H1 (cell line): ENCODE measurements at regions of chr18 and their contacts with region 1.

Region 1: GRCh38 chr18:65214456-65214855 is 536.4 kb upstream of the CDH7 start:
- DNase-seq: no peak
- H3K4me3 ChIP-seq: no peak overlapping the region
- H3K27ac ChIP-seq: no peak overlapping the region
- H3K4me1 ChIP-seq: no peaks in the 10 kb centered on the region
- H3K27me3 ChIP-seq: no peaks in the 10 kb centered on the region
- CTCF ChIP-seq: no peak
- EP300 ChIP-seq: no peak
- POLR2A ChIP-seq: no peak
- RAD21 ChIP-seq: no peak

Region 2: DNA sequence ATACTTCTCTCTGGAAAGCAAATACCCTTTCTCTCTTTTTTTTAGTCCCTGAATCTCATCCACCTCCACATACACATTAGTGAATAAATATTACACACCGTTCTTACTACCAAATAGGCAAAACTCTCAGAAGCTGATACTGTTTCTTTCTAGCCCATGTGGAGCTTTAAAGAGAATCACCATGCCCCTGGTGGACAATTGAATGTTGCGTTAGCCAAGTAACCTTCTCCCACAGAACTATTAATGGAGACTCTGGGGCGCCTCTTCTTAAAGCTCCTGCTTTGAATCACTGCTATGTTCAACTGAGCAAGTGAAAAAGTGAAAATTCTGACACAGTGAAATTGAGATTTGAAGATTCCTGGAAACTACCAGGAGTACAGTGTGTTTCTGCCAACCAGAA is 13.5 kb after region 1 on chr18:
- CTCF ChIA-PET with region 1: interaction called, 12 read pairs
- POLR2A ChIA-PET with region 1: no interaction called
- DNase-seq: no peak
- H3K4me3 ChIP-seq: no peak overlapping the region
- H3K27ac ChIP-seq: no peak overlapping the region
- H3K4me1 ChIP-seq: no peaks in the 10 kb centered on the region; a peak in 1 of 7 replicates
- H3K27me3 ChIP-seq: no peaks in the 10 kb centered on the region
- CTCF ChIP-seq: peak in 2 of 3 experiments; percentile 31 to 34; a peak in 2 of 4 replicates
- EP300 ChIP-seq: no peak
- POLR2A ChIP-seq: no peak
- RAD21 ChIP-seq: peak in 1 of 2 experiments; percentile 37; a peak in 2 of 4 replicates

Region 3: DNA sequence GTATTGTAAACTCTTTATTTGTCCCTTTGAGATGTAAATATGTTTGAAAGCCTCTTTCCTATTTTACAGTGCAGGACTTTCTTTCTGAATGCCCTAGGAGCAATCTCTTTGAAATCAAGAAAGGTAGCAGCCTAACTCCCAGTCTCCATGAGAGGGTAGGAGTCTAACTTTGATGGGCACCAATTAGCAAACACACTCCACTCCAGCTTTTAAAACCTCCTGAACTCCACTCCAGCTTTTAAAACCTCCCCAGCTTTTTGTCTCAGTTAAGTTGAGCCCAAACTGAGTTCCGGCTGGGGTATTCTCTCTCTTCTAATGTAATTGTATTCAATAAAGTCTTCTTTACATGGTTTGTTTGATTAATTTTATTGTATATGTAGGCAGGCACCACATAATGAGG is 42.7 kb after region 1 on chr18:
- CTCF ChIA-PET with region 1: no interaction called
- POLR2A ChIA-PET with region 1: no interaction called
- DNase-seq: no peak
- H3K4me3 ChIP-seq: no peak overlapping the region; a peak in 1 of 8 replicates
- H3K27ac ChIP-seq: no peak overlapping the region
- H3K4me1 ChIP-seq: no peaks in the 10 kb centered on the region
- H3K27me3 ChIP-seq: no peaks in the 10 kb centered on the region
- CTCF ChIP-seq: no peak
- EP300 ChIP-seq: no peak
- POLR2A ChIP-seq: no peak
- RAD21 ChIP-seq: peak in 1 of 2 experiments; percentile 5; a peak in 1 of 4 replicates

Region 4: GRCh38 chr18:65336411-65336810 is 122.0 kb after region 1 on chr18:
- CTCF ChIA-PET with region 1: no interaction called
- POLR2A ChIA-PET with region 1: no interaction called
- DNase-seq: no peak
- H3K4me3 ChIP-seq: no peak overlapping the region
- H3K27ac ChIP-seq: no peak overlapping the region
- H3K4me1 ChIP-seq: no peaks in the 10 kb centered on the region
- H3K27me3 ChIP-seq: no peaks in the 10 kb centered on the region
- CTCF ChIP-seq: no peak
- EP300 ChIP-seq: no peak
- POLR2A ChIP-seq: no peak
- RAD21 ChIP-seq: no peak